WTC11 (cell line): ENCODE measurements at regions of chr15 and their contacts with region 1.

Region 1: DNA sequence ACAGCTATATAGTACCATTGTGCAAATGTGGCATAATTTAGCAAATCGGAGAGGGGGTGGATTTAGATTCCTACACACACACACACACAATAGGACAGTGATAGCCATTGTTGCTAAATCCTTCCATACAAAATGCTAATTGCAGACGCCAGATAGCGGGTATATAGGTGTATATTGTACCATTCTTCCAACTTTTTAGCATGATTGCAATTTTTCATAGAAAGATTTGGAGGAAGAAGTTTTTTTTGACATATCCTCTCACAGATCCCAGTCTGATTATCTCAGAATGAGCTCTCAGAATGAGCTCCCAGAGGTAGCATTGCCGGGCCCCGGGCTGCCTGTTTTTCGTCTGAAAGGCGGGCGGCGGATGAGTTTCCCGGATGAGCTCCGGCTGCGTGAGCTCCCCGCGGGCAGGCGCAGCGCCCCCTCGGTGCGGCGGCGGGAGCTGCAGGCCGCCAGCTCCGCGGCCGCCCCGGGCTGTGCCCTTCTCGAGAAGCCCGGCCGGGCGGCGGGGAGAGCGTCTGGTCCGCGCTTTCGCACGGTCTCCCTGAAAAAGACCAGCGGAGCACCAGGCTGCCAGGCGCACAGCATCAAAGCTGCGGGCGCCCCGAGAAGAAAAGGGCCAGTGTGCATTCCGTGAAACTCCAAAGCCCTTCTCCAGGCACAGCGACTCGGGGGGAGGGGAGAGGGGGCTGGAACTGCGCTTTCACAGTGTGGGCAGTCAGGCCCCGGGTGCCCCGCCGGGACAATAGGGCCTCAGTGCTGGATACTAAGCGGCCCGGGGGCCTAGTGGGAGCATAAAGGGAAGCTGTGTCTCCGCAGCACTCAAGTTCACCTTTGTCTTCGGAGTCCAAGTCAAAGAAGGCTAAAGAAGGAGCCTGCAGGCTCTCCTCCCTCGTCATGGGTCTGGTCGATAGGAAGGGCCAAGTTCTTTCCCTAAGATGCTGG is 12.0 kb upstream of the SHC4 start:
- DNase-seq: peak; percentile 84
- ATAC-seq: peak; percentile 87
- H3K4me3 Mint-ChIP-seq: peak overlapping the region; percentile 62
- H3K27ac Mint-ChIP-seq: peak overlapping the region; percentile 68
- H3K4me1 Mint-ChIP-seq: peaks cover 18% of the 10 kb centered on the region
- H3K27me3 Mint-ChIP-seq: peaks cover 4% of the 10 kb centered on the region
- CTCF ChIP-seq: peak; percentile 96

Region 2: DNA sequence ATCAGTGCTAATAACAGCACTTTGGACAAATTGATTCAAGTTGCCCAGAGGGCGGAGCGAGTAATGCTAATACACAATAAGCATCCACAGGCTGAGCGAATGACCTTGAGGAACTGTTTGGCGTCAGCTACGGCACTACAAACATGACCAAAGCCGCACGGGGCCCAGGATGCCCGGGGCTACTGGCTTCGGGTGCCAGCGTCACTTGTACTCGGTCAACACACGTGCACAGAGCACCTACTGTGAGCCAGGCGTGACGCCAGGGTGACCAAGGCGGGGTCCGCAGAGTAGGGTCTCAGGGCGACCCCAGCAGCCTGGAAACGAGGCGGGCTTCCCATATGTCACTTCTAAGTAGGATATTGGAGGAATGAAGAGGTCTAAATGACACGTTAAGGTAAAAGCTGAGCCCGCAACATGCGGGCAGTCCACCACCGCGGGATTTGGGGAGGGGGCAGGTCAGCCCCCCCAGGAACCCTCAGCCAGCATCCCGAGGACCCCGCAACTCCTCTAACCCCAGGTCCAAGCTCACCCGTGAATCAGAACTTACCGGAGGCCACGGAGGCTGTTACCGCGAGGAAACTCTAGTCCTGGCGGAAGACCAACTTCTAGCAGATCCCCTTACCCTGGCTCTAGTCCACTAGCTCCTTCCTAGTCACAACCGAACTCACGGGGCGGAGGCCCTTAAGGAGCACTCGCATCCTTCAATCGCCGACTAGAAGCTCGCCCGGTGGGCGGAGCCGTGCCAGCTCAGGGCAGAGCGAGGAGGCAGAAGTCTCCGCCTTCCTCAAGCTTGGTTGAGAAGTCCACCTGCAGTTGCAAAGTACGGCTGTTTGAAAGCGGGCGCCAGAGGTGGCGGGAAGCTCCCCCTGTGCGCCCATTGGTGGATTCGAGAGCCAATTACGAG is 165.1 kb before region 1 on chr15 and contains the start of gene CEP152:
- CTCF ChIA-PET with region 1: interaction called, 13 read pairs
- POLR2A ChIA-PET with region 1: interaction called, 9 read pairs
- DNase-seq: peak; percentile 99
- ATAC-seq: peak; percentile 95
- H3K4me3 Mint-ChIP-seq: peak within 1 kb of the TSS; percentile 97
- H3K27ac Mint-ChIP-seq: peak within 1 kb of the TSS; percentile 98
- H3K4me1 Mint-ChIP-seq: peaks cover 34% of the 10 kb centered on the region
- H3K27me3 Mint-ChIP-seq: peaks cover 10% of the 10 kb centered on the region
- CTCF ChIP-seq: no peak
- total RNA-seq, gene CEP152: 12.8 to 16.7 TPM (median 13.0 TPM) in 3 replicates

Region 3: DNA sequence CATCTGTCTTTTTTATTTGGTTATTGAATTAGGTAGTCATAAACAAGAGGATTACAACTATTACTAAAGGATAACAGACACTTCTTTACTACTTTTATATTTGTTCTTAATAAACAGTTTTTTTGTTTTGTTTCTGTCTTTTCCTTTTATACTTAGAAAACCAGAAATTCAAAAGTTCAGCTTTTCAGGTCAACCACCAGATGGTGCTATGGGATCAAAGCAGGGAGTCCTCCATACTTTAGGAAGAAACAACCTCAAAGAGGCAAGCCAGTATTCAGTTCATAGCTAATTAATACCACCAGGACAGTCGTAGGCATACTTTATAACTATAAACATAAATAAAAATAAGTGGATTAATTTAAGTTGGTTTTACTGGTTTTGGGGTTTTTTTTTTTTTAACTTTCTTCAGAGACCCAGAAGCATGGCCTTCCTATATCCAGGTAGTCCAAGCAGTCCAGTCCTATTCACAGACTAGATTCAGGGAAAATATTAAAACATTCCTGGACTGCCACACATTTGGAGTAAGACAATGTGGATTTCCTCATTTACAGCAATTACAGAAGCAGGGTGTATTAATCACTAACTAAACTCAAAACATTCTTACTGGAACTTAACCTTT is 113.8 kb before region 1 on chr15:
- CTCF ChIA-PET with region 1: interaction called, 68 read pairs
- POLR2A ChIA-PET with region 1: no interaction called
- DNase-seq: peak; percentile 15
- ATAC-seq: peak; percentile 61
- H3K4me3 Mint-ChIP-seq: no peak overlapping the region
- H3K27ac Mint-ChIP-seq: no peak overlapping the region
- H3K4me1 Mint-ChIP-seq: peaks cover 22% of the 10 kb centered on the region
- H3K27me3 Mint-ChIP-seq: no peaks in the 10 kb centered on the region
- CTCF ChIP-seq: peak; percentile 60

Region 4: GRCh38 chr15:48888836-48889235 is 86.9 kb before region 1 on chr15:
- CTCF ChIA-PET with region 1: interaction called, 19 read pairs
- POLR2A ChIA-PET with region 1: no interaction called
- DNase-seq: no peak
- ATAC-seq: no peak
- H3K4me3 Mint-ChIP-seq: no peak overlapping the region
- H3K27ac Mint-ChIP-seq: no peak overlapping the region
- H3K4me1 Mint-ChIP-seq: peaks cover 4% of the 10 kb centered on the region; the same call in 1 of the 2 replicates
- H3K27me3 Mint-ChIP-seq: no peaks in the 10 kb centered on the region
- CTCF ChIP-seq: no peak

Region 5: GRCh38 chr15:48914717-48915116 is 61.0 kb before region 1 on chr15:
- CTCF ChIA-PET with region 1: interaction called, 15 read pairs
- POLR2A ChIA-PET with region 1: no interaction called
- DNase-seq: no peak
- ATAC-seq: no peak
- H3K4me3 Mint-ChIP-seq: no peak overlapping the region
- H3K27ac Mint-ChIP-seq: no peak overlapping the region
- H3K4me1 Mint-ChIP-seq: no peaks in the 10 kb centered on the region
- H3K27me3 Mint-ChIP-seq: no peaks in the 10 kb centered on the region; the same call in 1 of the 2 replicates
- CTCF ChIP-seq: no peak

Region 6: DNA sequence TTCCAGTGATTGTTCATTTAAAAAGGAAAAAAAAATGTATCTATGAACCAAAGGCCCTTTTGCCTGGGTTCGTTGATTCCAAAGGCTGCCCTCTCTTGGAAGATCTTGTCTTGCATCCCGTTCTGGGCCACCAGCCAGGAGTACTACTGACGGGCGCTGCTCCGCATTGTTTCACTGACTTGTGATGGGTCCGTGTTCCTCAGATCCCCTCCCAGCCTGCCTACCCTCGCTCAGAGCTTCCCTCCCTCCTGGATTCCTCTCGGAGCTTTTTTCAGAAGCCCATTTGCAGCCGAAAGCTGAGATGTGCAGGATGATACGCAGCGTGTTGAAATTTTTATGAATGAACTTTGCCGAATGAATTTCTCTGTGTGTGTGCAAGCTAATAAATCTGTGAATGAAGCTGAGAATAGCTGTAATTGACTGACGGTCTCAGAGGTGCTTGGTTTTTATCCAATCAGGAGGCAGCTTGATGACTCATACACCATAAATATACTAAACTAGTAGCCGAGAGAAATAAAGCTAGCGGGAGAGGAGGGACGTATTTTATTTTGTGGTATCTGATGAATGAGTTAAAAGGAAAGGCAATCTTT is 12.1 kb before region 1 on chr15 and contains the start of gene SHC4:
- CTCF ChIA-PET with region 1: interaction called, 152 read pairs
- POLR2A ChIA-PET with region 1: interaction called, 11 read pairs
- DNase-seq: peak; percentile 60
- ATAC-seq: peak; percentile 89
- H3K4me3 Mint-ChIP-seq: peak within 1 kb of the TSS; percentile 91
- H3K27ac Mint-ChIP-seq: no peak within 1 kb of the TSS; the same call in 1 of the 2 replicates
- H3K4me1 Mint-ChIP-seq: peaks cover 13% of the 10 kb centered on the region
- H3K27me3 Mint-ChIP-seq: peaks cover 41% of the 10 kb centered on the region
- CTCF ChIP-seq: no peak
- total RNA-seq, gene SHC4: 0.44 to 0.63 TPM (median 0.46 TPM) in 3 replicates

Region 7: GRCh38 chr15:49225613-49226281 is 250.0 kb after region 1 on chr15:
- CTCF ChIA-PET with region 1: interaction called, 11 read pairs
- POLR2A ChIA-PET with region 1: no interaction called
- DNase-seq: peak; percentile 80
- ATAC-seq: peak; percentile 99
- H3K4me3 Mint-ChIP-seq: no peak overlapping the region
- H3K27ac Mint-ChIP-seq: peak overlapping the region; percentile 4; the same call in 1 of the 2 replicates
- H3K4me1 Mint-ChIP-seq: peaks cover 23% of the 10 kb centered on the region
- H3K27me3 Mint-ChIP-seq: no peaks in the 10 kb centered on the region
- CTCF ChIP-seq: no peak